Lower leg skin (tissue), 4 donors: ENCODE measurements at regions of chr10 and their contacts with region 1.

Region 1: GRCh38 chr10:69716711-69717560 is 84.8 kb upstream of the COL13A1 start:
- DNase-seq: peak in 1 of 2 donors; percentile 86
- H3K4me3 ChIP-seq: no peak overlapping the region
- CTCF ChIP-seq: no peak
- POLR2A ChIP-seq: no peak

Region 2: DNA sequence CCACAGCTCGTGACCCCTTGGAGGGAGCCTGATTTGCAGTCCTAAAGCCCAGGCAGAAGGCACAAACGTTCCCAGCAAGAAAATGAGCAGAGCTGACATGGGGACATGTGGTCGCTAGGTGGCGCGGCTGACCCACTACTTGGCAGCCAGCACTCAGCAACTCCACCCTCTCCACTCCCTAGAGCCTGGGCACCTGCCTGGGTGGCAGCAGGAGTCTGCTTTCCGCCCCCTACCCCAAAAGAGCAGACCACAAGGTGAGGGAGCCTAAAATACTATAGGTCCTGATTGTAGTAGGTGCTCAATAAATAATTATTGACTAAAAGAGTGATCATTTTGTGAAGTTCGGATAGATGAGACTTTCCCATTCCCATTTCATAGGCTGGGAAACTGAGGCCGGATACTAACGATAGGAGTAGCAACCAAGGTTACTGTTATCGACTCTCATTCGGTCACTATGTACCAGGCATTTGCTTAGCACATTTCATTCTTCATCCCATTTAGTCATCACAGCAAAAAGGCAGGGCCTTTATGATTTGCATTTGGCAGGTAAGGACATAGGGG is 201.2 kb before region 1 on chr10:
- intact Hi-C with region 1: loop called (anchors 10 kb)
- DNase-seq: peak; percentile 42 to 91
- H3K4me3 ChIP-seq: no peak overlapping the region
- CTCF ChIP-seq: peak in 1 of 3 donors; percentile 30
- POLR2A ChIP-seq: no peak

Region 3: DNA sequence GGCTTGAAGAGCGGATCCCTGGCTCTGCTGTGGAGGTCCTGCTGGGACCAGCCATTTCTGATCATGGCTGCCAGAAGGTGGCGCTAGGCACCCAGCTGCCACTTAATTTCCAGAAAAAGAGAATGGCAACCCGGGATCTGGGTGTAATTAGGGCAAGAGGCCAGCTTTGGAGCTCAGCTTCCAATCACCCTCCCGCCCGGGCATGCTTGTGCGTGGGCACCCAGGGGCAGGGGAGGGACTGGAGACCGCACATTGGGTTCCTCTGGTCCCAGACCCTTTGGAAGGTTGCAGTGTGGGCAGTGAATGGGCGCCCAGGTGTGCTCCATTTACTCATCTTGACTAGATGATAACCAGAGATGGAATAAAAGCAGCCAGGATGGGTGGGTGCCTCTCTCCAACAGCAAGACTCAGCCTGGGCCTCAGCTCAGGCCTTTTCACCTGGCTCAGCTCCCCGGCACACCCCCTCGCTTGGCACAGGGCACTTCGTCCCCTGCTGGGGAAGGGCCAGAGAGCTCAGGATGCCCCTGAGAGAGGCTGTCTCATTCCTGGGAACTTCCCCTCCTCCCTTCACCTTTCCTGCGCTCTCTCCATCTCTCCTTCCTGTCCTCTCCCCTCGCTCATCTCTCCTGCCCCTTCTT is 72.2 kb before region 1 on chr10:
- intact Hi-C with region 1: loop called (anchors 5 kb)
- DNase-seq: peak in 1 of 2 donors; percentile 31
- H3K4me3 ChIP-seq: no peak overlapping the region
- CTCF ChIP-seq: no peak
- POLR2A ChIP-seq: no peak